ENCODE measurements at regions of chr1 and their contacts with region 1.

Region 1: GRCh38 chr1:26602378-26602959 is 72.9 kb downstream of the RPS6KA1 start:
- DNase-seq: peak; percentile 48
- ATAC-seq: no peak
- H3K4me3 ChIP-seq: no peak overlapping the region
- H3K27ac ChIP-seq: no peak overlapping the region
- H3K4me1 ChIP-seq: no peaks in the 10 kb centered on the region
- CTCF ChIP-seq: peak; percentile 81
- EP300 ChIP-seq: no peak
- POLR2A ChIP-seq: no peak
- RAD21 ChIP-seq: peak; percentile 88 to 91

Region 2: DNA sequence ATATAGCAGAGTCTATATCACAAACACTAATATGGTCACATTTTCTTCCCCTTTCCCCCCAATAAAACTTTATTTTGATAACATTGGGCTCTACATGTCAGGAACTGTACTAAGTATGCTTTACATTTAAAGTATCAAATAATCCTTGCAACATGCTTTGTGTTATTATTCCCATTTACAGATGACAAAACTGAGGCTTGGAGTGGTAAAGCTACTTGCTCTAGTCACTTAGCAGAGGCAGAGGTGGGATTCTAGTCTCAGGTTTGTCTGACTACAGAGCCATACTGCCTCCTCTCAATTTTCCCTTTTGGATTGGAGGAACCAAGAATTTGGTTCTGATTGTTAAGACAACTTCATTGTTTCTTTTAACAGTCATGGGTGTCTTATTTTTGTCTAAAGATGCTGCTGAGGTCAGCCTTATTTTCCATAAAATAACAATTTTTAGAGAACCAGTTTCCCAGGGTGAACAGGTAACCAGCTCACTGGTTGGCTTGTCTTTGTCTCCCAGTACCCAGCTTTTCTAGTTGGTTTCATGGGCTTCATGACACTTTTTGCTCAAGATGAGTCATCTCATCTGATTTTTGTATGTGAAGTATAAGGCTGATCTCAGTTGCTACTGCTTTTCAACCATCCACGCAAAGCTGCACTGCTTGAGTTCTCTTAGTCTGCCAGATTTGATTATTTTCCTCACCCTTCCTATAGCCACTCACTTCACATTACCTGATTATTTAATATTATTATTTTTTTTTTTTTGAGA is 12.4 kb after region 1 on chr1:
- CTCF ChIA-PET with region 1: interaction called, 29 read pairs
- POLR2A ChIA-PET with region 1: no interaction called
- DNase-seq: no peak
- ATAC-seq: no peak
- H3K4me3 ChIP-seq: no peak overlapping the region
- H3K27ac ChIP-seq: no peak overlapping the region
- H3K4me1 ChIP-seq: peaks cover 9% of the 10 kb centered on the region
- CTCF ChIP-seq: no peak
- EP300 ChIP-seq: no peak
- POLR2A ChIP-seq: no peak
- RAD21 ChIP-seq: no peak

Region 3: DNA sequence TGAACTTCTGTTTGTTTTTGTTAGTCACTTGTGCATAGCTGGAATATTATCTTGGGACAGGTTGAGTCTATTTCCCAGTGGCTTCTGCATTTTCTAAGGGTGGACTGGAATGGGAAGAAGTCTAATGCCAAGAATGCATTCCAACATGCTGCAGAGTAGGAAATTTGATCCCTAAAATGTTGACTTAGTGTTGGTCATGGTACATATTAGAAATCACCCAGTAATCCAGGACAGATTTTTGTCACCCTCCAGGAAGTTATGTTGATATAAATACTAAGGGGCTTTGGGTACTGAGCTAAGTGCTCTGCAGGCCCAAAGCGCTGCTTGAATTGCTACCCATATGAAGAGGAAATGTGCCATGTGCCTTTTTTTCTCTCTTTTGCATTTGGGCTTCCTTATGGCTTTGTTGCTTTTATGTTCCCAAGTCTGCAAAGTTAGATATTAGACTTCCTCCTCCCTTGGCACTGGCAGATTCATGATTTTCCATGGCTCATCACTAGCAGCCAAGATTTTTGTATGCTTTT is 103.4 kb after region 1 on chr1:
- CTCF ChIA-PET with region 1: interaction called, 15 read pairs
- POLR2A ChIA-PET with region 1: no interaction called
- DNase-seq: peak; percentile 72 to 90
- ATAC-seq: peak; percentile 91 to 94
- H3K4me3 ChIP-seq: no peak overlapping the region; the same call in 2 of the 3 replicates
- H3K27ac ChIP-seq: peak overlapping the region; percentile 81 to 93
- H3K4me1 ChIP-seq: peaks cover 76% of the 10 kb centered on the region
- CTCF ChIP-seq: no peak
- EP300 ChIP-seq: peak; percentile 16 to 63; a peak in 2 of 5 replicates
- POLR2A ChIP-seq: no peak
- RAD21 ChIP-seq: 0 out of 5 replicates have a peak, but pooled peaks of 1 of the 2 experiments have one; percentile 19

Region 4: DNA sequence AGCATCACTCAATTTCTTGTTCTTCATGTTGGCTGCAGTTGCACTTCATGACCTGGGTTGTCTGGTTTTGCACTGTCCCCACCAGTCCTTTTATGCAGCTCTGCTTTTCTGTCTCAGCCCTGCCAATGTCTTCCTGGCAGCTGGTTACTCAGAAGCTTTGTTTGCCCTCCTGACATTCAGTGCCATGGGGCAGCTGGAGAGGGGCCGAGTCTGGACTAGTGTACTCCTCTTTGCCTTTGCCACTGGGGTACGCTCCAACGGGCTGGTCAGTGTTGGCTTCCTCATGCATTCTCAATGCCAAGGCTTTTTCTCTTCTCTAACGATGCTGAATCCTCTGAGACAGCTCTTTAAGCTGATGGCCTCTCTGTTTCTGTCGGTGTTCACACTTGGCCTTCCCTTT is 191.9 kb after region 1 on chr1:
- CTCF ChIA-PET with region 1: interaction called, 215 read pairs
- POLR2A ChIA-PET with region 1: interaction called, 5 read pairs
- DNase-seq: no peak
- ATAC-seq: no peak
- H3K4me3 ChIP-seq: no peak overlapping the region
- H3K27ac ChIP-seq: no peak overlapping the region
- H3K4me1 ChIP-seq: peaks cover 3% of the 10 kb centered on the region; the same call in 2 of the 3 replicates
- CTCF ChIP-seq: no peak
- EP300 ChIP-seq: no peak
- POLR2A ChIP-seq: no peak
- RAD21 ChIP-seq: no peak

Region 5: DNA sequence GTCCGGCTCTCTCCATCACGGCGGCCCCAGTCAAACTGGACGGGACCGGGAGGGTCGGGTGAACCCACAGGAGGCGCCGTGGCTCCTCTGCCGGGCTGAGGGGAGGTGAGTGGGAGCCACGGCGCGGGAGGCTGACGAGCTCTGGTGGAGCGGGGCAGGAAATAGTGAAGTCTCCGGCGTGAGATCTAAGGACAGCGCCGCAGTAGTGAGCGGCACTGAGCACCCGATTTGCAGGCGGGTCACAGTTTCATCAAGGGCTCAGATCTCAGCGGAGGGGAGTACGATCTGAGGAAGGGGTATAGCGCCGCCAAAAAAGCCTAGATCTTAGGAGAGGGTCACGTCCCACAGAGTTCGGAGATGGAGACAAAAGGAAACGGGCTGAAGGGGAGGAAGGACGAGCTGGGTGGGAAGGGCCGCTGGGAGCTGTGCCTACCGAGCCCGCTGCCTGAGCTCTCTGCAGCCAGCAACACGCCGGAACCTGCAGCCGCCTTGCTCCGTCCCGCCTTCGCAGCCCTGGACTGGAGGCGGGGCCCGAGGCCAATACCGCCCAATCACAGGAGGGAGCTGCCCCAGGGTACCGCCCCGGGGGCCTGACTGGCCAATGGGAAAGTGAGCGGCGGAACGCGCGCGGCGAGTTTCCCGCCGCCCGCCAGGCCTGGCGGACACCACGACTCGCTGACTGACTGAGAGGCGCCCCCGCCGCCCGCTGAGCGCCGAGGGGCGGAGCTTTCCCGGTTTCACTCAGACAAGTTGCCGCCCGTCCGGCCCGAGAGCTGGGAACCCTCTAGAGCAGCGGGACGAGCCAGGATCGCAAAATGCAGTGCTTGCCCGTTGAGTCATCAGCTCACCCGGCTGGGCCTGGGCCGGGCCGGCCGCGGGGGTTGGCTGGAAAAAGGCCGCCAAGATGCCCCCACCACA is 262.4 kb after region 1 on chr1:
- CTCF ChIA-PET with region 1: interaction called, 12 read pairs
- POLR2A ChIA-PET with region 1: no interaction called
- DNase-seq: peak; percentile 65 to 96
- ATAC-seq: peak; percentile 76 to 89
- H3K4me3 ChIP-seq: peak overlapping the region; percentile 66
- H3K27ac ChIP-seq: peak overlapping the region; percentile 99 to 100
- H3K4me1 ChIP-seq: peaks cover 30% of the 10 kb centered on the region
- CTCF ChIP-seq: no peak
- EP300 ChIP-seq: no peak
- POLR2A ChIP-seq: peak; percentile 98
- RAD21 ChIP-seq: no peak

Region 6: DNA sequence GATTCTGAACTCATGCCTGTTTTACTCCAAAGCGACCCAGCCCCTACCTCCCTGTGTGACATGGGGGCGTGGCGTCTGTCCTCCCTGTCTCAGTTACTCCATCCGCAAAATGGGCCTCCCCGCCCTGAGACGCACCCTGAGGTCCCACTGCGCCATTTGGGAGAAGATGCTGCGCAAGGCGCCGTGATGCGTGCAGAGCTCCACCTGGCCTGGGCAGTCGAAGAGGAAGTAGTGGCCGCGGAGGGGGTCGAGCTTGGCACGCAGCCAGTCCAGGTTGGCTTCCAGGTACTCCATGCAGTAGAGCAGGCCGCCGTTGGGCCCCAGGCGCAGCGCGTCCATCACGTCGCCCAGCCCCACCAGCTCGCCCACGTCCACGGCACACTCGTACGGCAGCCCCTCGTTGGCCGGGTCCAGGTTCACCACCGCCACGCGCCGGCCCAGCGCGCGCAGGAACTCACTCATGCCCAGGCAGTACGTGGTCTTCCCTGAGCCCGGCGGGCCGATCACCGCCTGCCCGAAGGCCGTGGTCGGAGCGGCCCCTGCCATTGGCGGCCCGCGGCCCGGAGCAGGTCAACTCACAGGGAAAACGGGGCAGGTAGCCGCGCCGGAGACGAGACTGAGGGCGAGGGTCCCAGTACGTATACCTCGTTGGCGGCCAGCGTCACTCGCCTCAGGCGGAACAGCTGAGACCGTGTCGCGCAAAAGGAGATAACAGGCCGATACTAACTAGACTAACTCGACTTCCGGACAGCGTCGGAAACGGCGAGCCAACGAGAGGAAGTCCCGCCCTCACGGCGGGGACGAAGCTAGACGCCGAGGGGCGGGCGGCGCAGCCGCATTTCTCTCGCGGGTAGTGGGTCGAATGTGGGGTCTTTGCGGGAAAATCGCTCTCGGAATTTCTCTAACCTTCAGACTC is 287.3 kb after region 1 on chr1 and contains the start of gene GPN2:
- CTCF ChIA-PET with region 1: interaction called, 14 read pairs
- POLR2A ChIA-PET with region 1: no interaction called
- DNase-seq: peak; percentile 71 to 75
- ATAC-seq: peak; percentile 94 to 96
- H3K4me3 ChIP-seq: peak within 1 kb of the TSS; percentile 88
- H3K27ac ChIP-seq: peak within 1 kb of the TSS; percentile 88 to 90
- H3K4me1 ChIP-seq: peaks cover 9% of the 10 kb centered on the region; the same call in 2 of the 3 replicates
- CTCF ChIP-seq: no peak
- EP300 ChIP-seq: no peak
- POLR2A ChIP-seq: peak; percentile 46
- RAD21 ChIP-seq: no peak
- polyA plus RNA-seq, gene GPN2: 18.1 and 23.6 TPM in 2 replicates

Region 7: GRCh38 chr1:27031235-27032118 is 429.0 kb after region 1 on chr1:
- CTCF ChIA-PET with region 1: no interaction called
- POLR2A ChIA-PET with region 1: no interaction called
- DNase-seq: no peak
- ATAC-seq: no peak
- H3K4me3 ChIP-seq: no peak overlapping the region
- H3K27ac ChIP-seq: 0 out of 6 replicates have a peak overlapping the region, but pooled peaks of 1 of the 2 experiments have one; percentile 18
- H3K4me1 ChIP-seq: no peaks in the 10 kb centered on the region
- CTCF ChIP-seq: no peak
- EP300 ChIP-seq: no peak
- POLR2A ChIP-seq: no peak
- RAD21 ChIP-seq: no peak

Measured in A549 (cell line).